ENCODE measurements at regions of chr4 and their contacts with region 1.

Region 1: GRCh38 chr4:1130316-1131186 is 17.2 kb upstream of the RNF212 start:
- DNase-seq: peak in 1 of 2 donors; percentile 62
- ATAC-seq: peak; percentile 97

Region 2: DNA sequence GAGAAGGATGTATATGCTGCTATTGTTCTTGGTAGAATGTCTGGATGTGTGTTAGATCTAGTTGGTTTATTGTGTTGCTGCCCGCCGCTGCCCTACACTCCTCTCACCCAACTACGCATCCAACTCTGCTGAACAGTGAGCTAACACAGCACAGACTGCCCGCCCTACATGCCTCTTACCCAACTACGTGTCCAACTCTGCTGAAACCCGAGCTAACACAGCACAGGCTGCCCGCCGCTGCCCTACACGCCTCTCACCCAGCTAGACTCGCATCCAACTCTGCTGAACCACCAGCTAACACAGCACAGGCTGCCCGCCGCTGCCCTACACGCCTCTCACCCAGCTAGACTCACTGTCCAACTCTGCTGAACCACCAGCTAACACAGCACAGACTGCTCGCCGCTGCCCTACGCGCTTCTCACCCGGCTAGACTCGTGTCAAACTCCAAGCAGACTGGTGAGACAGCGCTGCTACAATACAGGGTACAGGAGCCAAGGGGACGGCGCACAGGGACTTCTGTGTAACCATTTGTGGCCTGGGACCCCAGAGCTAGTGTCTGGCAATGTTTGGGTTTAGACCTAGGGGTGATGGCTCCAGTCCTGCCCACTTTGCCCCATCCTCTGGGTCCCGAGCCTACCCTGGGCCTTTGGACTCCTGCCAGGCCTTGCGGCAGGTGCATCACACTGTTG is 130.0 kb after region 1 on chr4:
- intact Hi-C with region 1: loop called in 1 of 2 experiments (anchors 10 kb)
- DNase-seq: no peak
- ATAC-seq: no peak

Region 3: DNA sequence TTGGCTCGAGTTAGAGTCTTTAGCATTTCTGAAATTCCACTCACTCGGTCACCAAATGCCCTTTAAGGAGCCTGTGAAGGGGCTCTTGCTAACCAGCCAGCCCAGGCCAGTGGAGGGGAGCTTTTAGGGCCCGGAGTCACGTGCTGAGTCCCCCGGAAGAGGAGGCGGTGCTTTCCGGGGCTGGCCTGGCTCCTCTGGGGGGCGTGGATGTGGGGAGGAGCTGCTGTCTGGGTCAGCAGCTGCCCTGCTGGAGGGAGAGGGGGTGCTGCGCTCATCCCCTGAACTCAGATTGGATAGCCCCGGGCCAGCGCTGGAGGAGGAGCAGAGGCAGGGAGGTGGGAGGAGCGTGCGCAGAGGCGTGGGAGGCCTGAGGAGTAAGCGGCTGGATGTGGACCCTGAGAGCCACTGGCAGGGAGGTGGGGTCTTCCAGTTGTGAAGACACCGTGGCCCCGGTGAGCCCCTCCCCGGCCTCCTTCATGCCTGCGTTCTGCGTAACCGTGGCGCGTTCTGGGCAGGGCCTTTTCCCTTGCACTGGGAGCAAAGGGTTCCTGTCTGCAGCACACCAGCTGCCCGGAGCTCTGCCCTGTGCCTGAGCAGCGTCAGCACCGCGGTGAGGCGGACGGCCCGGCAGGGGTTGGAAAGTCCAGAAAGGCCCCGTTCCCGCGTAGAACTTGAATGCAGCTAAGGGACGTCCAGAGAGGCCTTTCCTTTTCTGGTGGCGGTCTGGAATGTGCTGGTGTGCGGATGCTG is 178.9 kb after region 1 on chr4:
- intact Hi-C with region 1: no loop called
- DNase-seq: peak; percentile 65 to 84
- ATAC-seq: peak; percentile 29

Region 4: DNA sequence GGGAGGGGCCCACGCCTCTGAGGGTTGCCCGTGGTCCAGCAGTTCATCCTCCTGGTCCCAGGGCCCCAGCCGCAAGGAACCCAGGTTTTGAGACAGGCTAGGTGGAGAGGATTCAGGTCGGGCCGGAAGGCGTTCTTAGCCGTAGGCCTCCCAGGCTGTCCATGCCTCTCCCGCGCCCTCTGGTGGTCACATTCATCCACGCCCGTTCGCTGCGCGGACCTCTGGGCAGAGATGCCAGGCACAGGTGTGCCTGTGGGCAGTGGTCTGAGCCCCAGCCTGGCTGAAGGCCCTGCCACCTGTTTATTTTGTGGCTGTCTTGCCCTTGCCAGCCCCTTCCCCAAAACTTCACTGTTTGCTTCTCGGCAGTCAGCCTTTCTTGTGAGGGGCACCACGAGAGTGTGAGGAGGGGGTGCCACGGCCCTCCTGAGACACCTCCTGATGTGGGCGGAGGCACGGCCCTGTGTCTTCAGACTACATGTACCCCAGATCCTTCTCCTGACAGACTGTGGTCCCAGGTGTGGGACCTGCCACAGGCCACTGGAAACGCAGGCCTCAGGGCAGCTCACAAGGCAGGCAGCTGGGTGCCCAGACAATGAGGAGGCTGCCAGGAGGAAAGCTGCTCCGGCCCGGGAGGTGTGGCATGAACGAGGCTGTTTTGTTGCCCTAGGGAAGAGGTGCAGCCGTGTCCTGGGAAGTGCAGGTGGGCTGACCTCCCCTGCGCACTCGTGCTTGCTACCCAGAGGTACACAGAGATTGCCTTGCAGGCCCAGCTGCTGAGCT is 221.5 kb after region 1 on chr4:
- intact Hi-C with region 1: loop called in 1 of 2 experiments (anchors 5 kb)
- DNase-seq: peak; percentile 73 to 95
- ATAC-seq: peak; percentile 46

Measured in left colon (tissue), 2 donors.